Activated T-helper 1 cell treated with anti-CD3 and anti-CD28 coated beads, Interleukin-12 subunit alpha, Interleukin-12 subunit beta, Interleukin-2, Interleukin-4 antibody, amounts not matched to agents 30 ng/mL and 10 ng/mL and 1 ng/mL, durations not matched to agents 14 hours and 24 hours and 36 hours (primary cell): ENCODE measurements at regions of chr16 and their contacts with region 1.

Region 1: GRCh38 chr16:19294156-19294649 is 8.7 kb downstream of the CLEC19A start:
- DNase-seq: peak; percentile 3
- H3K4me3 Mint-ChIP-seq: peak overlapping the region; percentile 37
- H3K27ac Mint-ChIP-seq: peak overlapping the region; percentile 82
- H3K4me1 Mint-ChIP-seq: peaks cover 16% of the 10 kb centered on the region
- H3K27me3 Mint-ChIP-seq: peaks cover 3% of the 10 kb centered on the region

Region 2: GRCh38 chr16:18932243-18932981 is 361.8 kb before region 1 on chr16:
- intact Hi-C with region 1: loop called (anchors 5 kb)
- DNase-seq: no peak
- H3K4me3 Mint-ChIP-seq: no peak overlapping the region
- H3K27ac Mint-ChIP-seq: no peak overlapping the region
- H3K4me1 Mint-ChIP-seq: peaks cover 24% of the 10 kb centered on the region
- H3K27me3 Mint-ChIP-seq: peaks cover 3% of the 10 kb centered on the region

Region 3: GRCh38 chr16:19223235-19224170 is 70.7 kb before region 1 on chr16:
- intact Hi-C with region 1: no loop called
- DNase-seq: no peak
- H3K4me3 Mint-ChIP-seq: no peak overlapping the region
- H3K27ac Mint-ChIP-seq: no peak overlapping the region
- H3K4me1 Mint-ChIP-seq: no peaks in the 10 kb centered on the region
- H3K27me3 Mint-ChIP-seq: no peaks in the 10 kb centered on the region

Region 4: DNA sequence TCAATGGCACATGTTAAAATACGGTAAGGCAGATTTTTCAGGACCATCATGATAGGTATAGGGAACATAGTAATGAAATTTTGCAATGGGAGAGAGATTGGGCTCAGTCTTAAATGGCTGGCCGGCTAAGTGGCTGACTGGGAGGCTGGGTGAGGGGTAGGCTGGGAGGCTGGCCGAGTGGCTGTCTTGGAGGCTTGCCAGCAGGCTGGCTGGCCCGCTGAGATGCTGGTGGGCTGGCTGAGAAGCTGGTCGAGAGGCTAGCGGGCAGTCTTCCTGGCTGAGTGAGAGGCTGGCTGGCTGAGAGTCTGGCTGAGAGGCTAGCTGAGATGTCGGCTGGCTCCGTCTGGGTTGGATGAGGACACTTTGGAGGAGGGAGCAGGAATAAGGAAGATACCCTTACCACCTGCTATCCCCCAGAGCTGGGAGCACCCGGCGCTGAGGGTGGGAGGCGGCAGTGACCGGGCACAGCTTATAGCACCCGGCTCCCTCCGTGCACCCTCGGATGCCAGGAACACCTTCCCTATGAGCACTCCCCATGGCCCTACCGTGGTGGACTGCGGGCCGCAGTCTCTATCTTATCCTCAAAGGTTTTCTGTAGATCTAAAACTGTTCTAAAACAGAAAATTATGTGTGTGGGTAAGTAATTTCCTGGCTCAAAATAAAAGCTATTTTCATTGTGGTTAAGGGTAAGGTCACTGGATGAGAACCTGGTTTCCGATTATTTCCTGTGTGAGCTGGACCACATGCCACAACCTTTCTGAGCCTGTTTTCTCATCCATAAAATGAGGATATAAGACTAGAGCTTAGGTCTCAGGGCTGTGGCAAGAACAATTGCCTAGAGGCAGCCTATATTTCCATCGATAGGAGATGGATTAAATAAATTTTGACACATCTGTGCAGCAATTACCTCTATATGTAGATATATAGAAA is 88.9 kb after region 1 on chr16:
- intact Hi-C with region 1: loop called (anchors 1 kb)
- DNase-seq: peak; percentile 1
- H3K4me3 Mint-ChIP-seq: no peak overlapping the region
- H3K27ac Mint-ChIP-seq: no peak overlapping the region
- H3K4me1 Mint-ChIP-seq: peaks cover 37% of the 10 kb centered on the region
- H3K27me3 Mint-ChIP-seq: peaks cover 19% of the 10 kb centered on the region

Region 5: DNA sequence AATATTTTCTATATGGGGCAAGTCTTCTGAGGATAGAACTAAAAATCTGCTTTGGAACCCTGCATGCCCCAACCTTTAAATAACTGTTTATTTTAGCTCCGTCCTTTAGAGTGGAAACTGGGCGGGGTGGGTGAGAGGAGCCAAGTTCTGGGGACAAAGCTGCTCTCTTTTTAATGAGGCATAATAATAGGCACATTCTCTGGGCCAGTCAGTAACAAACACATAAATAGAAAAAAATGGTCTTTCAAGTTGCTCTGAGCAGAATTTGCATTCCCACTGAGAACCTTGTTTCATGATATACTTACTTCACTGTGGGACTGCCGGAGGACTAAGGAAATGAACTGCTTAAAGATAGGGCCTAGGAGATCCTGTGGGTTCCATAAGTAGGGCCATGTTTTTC is 372.3 kb after region 1 on chr16:
- intact Hi-C with region 1: no loop called
- DNase-seq: no peak
- H3K4me3 Mint-ChIP-seq: no peak overlapping the region
- H3K27ac Mint-ChIP-seq: no peak overlapping the region
- H3K4me1 Mint-ChIP-seq: no peaks in the 10 kb centered on the region
- H3K27me3 Mint-ChIP-seq: no peaks in the 10 kb centered on the region

Region 6: GRCh38 chr16:19860166-19861041 is 566.2 kb after region 1 on chr16:
- intact Hi-C with region 1: no loop called
- DNase-seq: no peak
- H3K4me3 Mint-ChIP-seq: no peak overlapping the region
- H3K27ac Mint-ChIP-seq: no peak overlapping the region
- H3K4me1 Mint-ChIP-seq: no peaks in the 10 kb centered on the region
- H3K27me3 Mint-ChIP-seq: no peaks in the 10 kb centered on the region